Activated B cell treated with CpG ODN at 0.5 μM for 24 hours (primary cell): ENCODE measurements at regions of chr1 and their contacts with region 1.

Region 1: GRCh38 chr1:66253330-66253921 is 280.5 kb upstream of the SGIP1 start:
- DNase-seq: no peak
- ATAC-seq: peak; percentile 95
- H3K4me3 Mint-ChIP-seq: no peak overlapping the region
- H3K27ac Mint-ChIP-seq: peak overlapping the region; percentile 82
- H3K4me1 Mint-ChIP-seq: peaks cover 28% of the 10 kb centered on the region
- H3K27me3 Mint-ChIP-seq: no peaks in the 10 kb centered on the region
- CTCF ChIP-seq: peak; percentile 34

Region 2: DNA sequence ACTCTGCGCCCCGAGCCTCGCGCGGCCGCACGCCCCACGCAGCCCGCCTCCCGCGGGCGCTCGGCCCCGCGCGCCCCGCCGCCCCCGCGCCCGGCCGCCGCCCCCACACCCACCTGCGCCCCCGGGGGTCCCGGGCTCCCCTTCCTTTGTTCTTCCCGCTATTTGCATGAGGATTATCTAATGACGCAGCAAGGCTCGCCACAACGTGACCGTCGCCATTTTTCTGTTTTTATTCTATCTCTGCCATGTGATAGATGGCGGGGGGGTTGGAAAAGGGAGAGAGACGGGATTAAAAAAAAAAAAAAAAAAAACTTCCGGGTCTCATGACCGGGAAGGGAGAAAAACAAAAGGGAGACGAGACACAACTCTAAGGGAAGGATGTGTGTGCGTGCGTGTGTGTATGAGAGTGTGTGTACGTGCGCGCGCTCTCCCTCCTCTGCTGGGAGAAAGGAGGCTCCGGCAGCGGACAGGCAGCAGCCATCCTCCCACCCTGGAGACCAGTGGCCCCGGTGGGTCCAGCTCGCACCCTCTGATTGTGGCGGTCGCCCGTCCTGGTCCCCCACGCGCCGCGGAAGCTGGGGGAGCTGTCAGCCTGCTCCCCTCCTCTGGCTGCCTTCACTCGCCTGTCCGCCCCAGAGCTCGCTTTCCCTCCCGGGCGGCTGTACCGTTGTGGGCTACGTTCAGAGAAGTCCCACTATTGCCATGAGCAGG is 1185.8 kb before region 1 on chr1:
- CTCF ChIA-PET with region 1: no interaction called
- POLR2A ChIA-PET with region 1: no interaction called
- intact Hi-C with region 1: loop called (anchors 10 kb)
- DNase-seq: peak; percentile 50
- ATAC-seq: peak; percentile 15
- H3K4me3 Mint-ChIP-seq: peak overlapping the region; percentile 97
- H3K27ac Mint-ChIP-seq: peak overlapping the region; percentile 99
- H3K4me1 Mint-ChIP-seq: peaks cover 48% of the 10 kb centered on the region
- H3K27me3 Mint-ChIP-seq: no peaks in the 10 kb centered on the region
- CTCF ChIP-seq: no peak

Region 3: GRCh38 chr1:65872301-65872700 is 381.1 kb before region 1 on chr1:
- CTCF ChIA-PET with region 1: no interaction called
- POLR2A ChIA-PET with region 1: no interaction called
- intact Hi-C with region 1: no loop called
- DNase-seq: no peak
- ATAC-seq: no peak
- H3K4me3 Mint-ChIP-seq: no peak overlapping the region
- H3K27ac Mint-ChIP-seq: no peak overlapping the region
- H3K4me1 Mint-ChIP-seq: no peaks in the 10 kb centered on the region
- H3K27me3 Mint-ChIP-seq: no peaks in the 10 kb centered on the region
- CTCF ChIP-seq: no peak

Region 4: GRCh38 chr1:66265796-66266195 is 12.4 kb after region 1 on chr1:
- CTCF ChIA-PET with region 1: interaction called, 4 read pairs
- POLR2A ChIA-PET with region 1: no interaction called
- intact Hi-C with region 1: loop called (anchors 1 kb)
- DNase-seq: no peak
- ATAC-seq: no peak
- H3K4me3 Mint-ChIP-seq: no peak overlapping the region
- H3K27ac Mint-ChIP-seq: peak overlapping the region; percentile 30
- H3K4me1 Mint-ChIP-seq: peaks cover 22% of the 10 kb centered on the region
- H3K27me3 Mint-ChIP-seq: no peaks in the 10 kb centered on the region
- CTCF ChIP-seq: no peak

Region 5: GRCh38 chr1:66360285-66360724 is 106.9 kb after region 1 on chr1:
- CTCF ChIA-PET with region 1: interaction called, 6 read pairs
- POLR2A ChIA-PET with region 1: no interaction called
- intact Hi-C with region 1: loop called (anchors 1 kb)
- DNase-seq: no peak
- ATAC-seq: peak; percentile 64
- H3K4me3 Mint-ChIP-seq: no peak overlapping the region
- H3K27ac Mint-ChIP-seq: peak overlapping the region; percentile 77
- H3K4me1 Mint-ChIP-seq: peaks cover 84% of the 10 kb centered on the region
- H3K27me3 Mint-ChIP-seq: no peaks in the 10 kb centered on the region
- CTCF ChIP-seq: no peak

Region 6: DNA sequence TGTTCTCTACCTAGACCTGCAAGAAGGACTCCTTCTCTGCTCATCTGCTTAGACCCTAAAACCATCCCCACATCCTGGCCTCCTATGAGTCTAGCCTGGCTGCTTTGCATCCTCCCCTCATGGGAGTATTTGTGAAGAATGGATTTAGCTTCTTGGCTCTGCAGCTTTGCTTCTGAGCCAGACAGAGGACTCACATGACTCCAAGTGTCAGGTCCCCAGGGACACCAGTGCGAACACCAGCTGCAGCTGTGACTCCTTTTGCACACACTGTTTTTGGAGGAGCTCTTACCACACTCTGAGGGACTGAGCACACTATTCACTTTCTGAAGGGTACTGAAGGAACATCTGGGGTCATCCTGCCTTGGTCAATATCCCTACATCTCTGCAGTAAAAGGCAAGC is 148.8 kb after region 1 on chr1:
- CTCF ChIA-PET with region 1: interaction called, 6 read pairs
- POLR2A ChIA-PET with region 1: interaction called, 5 read pairs
- intact Hi-C with region 1: loop called (anchors 1 kb)
- DNase-seq: peak; percentile 65
- ATAC-seq: peak; percentile 86
- H3K4me3 Mint-ChIP-seq: peak overlapping the region; percentile 72
- H3K27ac Mint-ChIP-seq: peak overlapping the region; percentile 90
- H3K4me1 Mint-ChIP-seq: peaks cover 67% of the 10 kb centered on the region
- H3K27me3 Mint-ChIP-seq: no peaks in the 10 kb centered on the region
- CTCF ChIP-seq: no peak

Region 7: DNA sequence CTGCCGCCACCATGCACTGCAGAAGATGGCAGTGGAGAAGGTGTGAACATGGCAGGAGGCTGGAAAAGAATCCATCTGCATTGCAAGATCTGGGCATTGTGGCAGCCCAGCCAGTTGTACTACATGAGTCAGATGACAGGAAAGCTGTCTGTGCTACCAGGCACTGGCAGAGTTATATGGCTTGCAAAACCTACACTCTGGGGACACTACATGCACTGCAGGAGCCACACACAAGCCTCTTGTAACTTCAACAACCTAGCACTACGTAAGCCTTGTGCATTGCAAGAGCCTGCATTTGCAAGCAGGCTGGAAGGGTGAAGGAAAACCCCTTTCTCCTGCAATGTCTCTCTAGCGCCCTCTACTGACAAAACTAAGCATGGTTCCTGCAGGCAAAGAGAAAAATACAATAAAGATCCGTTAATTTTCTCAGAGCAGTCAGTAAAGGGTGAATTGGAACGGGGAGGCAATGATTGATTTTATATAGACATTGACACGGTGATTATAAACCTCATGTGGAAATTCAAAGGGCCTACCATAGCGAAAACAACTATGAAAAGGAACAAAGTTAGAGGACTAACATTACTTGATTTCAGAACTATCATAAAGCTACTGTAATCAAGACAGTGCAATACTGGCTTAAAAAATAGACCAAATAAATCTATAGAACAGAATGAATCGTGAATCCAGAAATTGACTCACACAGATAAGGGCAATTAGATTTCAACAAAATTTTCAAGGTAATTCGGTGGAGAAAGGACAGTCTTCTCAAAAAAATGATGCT is 472.6 kb after region 1 on chr1:
- CTCF ChIA-PET with region 1: interaction called, 3 read pairs
- POLR2A ChIA-PET with region 1: no interaction called
- intact Hi-C with region 1: loop called (anchors 1 kb)
- DNase-seq: no peak
- ATAC-seq: peak; percentile 85
- H3K4me3 Mint-ChIP-seq: no peak overlapping the region
- H3K27ac Mint-ChIP-seq: no peak overlapping the region
- H3K4me1 Mint-ChIP-seq: no peaks in the 10 kb centered on the region
- H3K27me3 Mint-ChIP-seq: peaks cover 19% of the 10 kb centered on the region
- CTCF ChIP-seq: peak; percentile 93